Dendritic cell treated with granulocyte-macrophage colony-stimulating factor and Interleukin-4, amounts not matched to agents 40 ng/mL and 50 ng/mL, for 4 days (primary cell): ENCODE measurements at regions of chr15 and their contacts with region 1.

Region 1: GRCh38 chr15:78979456-78980320 is 34.8 kb upstream of the CTSH start:
- H3K4me3 Mint-ChIP-seq: peak overlapping the region; percentile 82
- H3K27ac Mint-ChIP-seq: peak overlapping the region; percentile 98
- H3K4me1 Mint-ChIP-seq: peaks cover 90% of the 10 kb centered on the region
- H3K27me3 Mint-ChIP-seq: no peaks in the 10 kb centered on the region

Region 2: DNA sequence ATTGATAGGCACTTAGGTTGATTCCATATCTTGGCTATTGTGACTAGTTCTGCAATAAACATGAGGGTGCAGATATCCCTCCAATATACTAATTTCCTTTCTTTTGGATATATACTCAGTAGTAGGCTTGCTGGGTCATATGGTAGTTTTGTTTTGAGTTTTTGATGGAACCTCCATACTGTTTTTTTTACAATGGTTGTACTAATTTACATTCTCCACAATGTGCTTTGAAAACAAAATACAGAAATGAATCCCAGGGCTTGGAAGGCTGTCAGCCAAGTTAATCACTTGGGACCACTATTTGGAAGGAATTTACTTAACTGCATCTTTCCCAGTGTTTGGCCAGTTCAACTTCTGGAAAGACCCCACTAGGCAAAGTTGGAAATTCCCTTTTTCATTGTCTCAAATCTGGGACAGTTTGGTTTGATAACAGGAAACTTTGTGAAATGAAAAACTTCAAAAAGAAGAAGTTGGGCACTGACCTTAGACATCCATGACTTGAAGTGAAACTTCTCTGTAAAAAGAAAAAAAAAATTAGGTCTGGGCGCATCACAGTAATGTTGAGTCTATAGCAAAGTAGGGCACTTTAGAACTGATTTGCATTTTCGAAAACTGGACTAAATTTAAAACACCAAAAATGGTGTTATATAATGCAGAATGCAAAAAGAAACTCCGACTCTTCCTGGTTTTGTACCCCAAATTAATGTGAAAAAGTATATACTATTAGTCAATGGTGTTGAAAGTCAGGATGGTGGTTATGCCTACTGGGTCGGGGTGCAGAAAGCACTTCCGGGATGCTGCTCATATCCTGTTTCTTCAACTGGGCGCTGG is 40.8 kb before region 1 on chr15:
- intact Hi-C with region 1: loop called (anchors 5 kb)
- H3K4me3 Mint-ChIP-seq: peak overlapping the region; percentile 57
- H3K27ac Mint-ChIP-seq: peak overlapping the region; percentile 99
- H3K4me1 Mint-ChIP-seq: peaks cover 56% of the 10 kb centered on the region
- H3K27me3 Mint-ChIP-seq: no peaks in the 10 kb centered on the region

Region 3: GRCh38 chr15:78992416-78993256 is 12.9 kb after region 1 on chr15:
- intact Hi-C with region 1: no loop called
- H3K4me3 Mint-ChIP-seq: no peak overlapping the region
- H3K27ac Mint-ChIP-seq: peak overlapping the region; percentile 95
- H3K4me1 Mint-ChIP-seq: peaks cover 81% of the 10 kb centered on the region
- H3K27me3 Mint-ChIP-seq: peaks cover 3% of the 10 kb centered on the region